Mammary epithelial cell (primary cell): ENCODE measurements at regions of chr17 and their contacts with region 1.

Region 1: DNA sequence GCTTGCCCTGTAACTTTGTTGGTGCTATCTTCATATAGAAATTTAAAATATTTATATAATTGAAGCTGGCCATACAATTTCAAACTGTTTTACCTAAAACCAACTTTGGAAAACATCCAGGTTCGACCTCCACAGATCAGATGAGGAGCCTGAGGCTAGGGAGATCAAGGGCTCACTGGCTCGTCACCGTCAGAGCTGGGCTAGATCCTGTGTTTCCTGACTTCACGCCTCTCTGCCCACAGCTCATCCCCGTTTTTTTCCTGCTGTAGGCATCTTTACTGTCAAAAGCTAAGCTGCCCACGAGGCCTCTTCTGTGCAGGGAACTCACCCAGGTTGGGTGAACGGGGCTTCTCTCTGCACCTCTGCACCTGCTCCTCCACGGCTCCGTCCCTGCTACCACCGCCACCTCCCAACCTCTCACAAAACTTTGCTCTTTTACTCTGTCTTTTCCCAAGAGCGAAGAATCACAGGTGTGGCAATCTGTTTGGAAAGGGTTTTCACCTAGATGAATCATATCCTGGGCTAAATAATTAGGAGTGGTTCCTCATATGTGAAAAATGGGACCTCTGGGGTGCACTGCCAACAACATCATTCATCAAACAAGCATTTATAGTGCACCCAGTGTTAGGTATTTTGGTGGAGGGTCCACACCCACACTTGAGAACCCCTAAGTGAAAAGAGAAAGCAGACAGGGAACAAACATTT is 24.8 kb upstream of the KDM6B start:
- DNase-seq: peak; percentile 80
- H3K4me3 ChIP-seq: peak overlapping the region; percentile 2 to 15 (median 9)
- H3K27ac ChIP-seq: peak overlapping the region; percentile 25
- H3K4me1 ChIP-seq: peaks cover 19% of the 10 kb centered on the region
- H3K27me3 ChIP-seq: no peaks in the 10 kb centered on the region
- CTCF ChIP-seq: no peak

Region 2: DNA sequence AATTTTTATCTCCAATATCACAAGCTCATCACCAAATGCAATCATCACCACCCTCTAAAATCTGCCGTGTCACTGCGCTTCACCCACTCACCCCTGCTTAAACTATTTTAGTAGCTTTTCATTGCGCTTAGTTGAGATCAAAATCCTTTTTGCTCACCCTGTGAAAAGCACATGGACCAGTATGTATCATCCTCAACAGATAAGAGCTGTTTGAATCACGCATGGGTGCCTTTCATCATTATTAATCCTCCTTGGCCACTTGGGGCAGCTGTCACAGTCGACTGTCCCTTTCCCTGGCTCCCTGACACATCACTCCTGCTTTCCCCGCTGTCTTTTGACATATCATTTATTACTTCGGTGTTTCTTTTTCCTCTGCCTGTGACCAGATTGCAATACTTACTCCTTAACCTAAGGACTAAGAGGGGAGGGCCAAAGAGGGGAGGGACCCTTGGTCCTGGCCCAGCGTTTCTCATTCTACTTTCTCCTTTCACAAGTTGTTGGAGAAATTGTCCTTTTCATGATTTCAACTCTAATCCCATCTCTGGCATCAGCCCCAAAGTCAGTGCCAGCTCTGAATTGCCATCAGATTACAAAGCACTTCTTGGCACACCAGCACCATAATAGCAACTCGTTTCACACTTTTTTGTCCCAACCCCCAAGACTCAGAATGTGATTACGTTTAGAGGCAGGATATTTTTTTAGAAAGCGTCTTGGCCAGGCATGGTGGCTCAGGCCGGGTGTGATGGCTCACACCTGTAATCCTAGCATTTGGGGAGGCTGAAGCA is 16.2 kb after region 1 on chr17:
- CTCF ChIA-PET with region 1: no interaction called
- dilution Hi-C with region 1: no loop called
- in situ Hi-C with region 1: no loop called
- intact Hi-C with region 1: no loop called
- DNase-seq: no peak
- H3K4me3 ChIP-seq: no peak overlapping the region
- H3K27ac ChIP-seq: no peak overlapping the region
- H3K4me1 ChIP-seq: peaks cover 1% of the 10 kb centered on the region
- H3K27me3 ChIP-seq: no peaks in the 10 kb centered on the region
- CTCF ChIP-seq: peak in 1 of 2 donors; percentile 19

Region 3: GRCh38 chr17:7844292-7845154 is 35.3 kb after region 1 on chr17:
- CTCF ChIA-PET with region 1: interaction called, 13 read pairs
- dilution Hi-C with region 1: no loop called
- in situ Hi-C with region 1: no loop called
- intact Hi-C with region 1: no loop called
- DNase-seq: peak; percentile 94
- H3K4me3 ChIP-seq: peak overlapping the region; percentile 60 to 75 (median 71)
- H3K27ac ChIP-seq: peak overlapping the region; percentile 96
- H3K4me1 ChIP-seq: peaks cover 26% of the 10 kb centered on the region
- H3K27me3 ChIP-seq: no peaks in the 10 kb centered on the region
- CTCF ChIP-seq: no peak

Region 4: GRCh38 chr17:7867881-7868329 is 58.7 kb after region 1 on chr17:
- CTCF ChIA-PET with region 1: no interaction called
- dilution Hi-C with region 1: no loop called
- in situ Hi-C with region 1: no loop called
- intact Hi-C with region 1: no loop called
- DNase-seq: peak; percentile 74
- H3K4me3 ChIP-seq: no peak overlapping the region
- H3K27ac ChIP-seq: no peak overlapping the region
- H3K4me1 ChIP-seq: peaks cover 12% of the 10 kb centered on the region
- H3K27me3 ChIP-seq: no peaks in the 10 kb centered on the region
- CTCF ChIP-seq: peak in 1 of 2 donors; percentile 6